ENCODE measurements at regions of chr3 and their contacts with region 1.

Region 1: DNA sequence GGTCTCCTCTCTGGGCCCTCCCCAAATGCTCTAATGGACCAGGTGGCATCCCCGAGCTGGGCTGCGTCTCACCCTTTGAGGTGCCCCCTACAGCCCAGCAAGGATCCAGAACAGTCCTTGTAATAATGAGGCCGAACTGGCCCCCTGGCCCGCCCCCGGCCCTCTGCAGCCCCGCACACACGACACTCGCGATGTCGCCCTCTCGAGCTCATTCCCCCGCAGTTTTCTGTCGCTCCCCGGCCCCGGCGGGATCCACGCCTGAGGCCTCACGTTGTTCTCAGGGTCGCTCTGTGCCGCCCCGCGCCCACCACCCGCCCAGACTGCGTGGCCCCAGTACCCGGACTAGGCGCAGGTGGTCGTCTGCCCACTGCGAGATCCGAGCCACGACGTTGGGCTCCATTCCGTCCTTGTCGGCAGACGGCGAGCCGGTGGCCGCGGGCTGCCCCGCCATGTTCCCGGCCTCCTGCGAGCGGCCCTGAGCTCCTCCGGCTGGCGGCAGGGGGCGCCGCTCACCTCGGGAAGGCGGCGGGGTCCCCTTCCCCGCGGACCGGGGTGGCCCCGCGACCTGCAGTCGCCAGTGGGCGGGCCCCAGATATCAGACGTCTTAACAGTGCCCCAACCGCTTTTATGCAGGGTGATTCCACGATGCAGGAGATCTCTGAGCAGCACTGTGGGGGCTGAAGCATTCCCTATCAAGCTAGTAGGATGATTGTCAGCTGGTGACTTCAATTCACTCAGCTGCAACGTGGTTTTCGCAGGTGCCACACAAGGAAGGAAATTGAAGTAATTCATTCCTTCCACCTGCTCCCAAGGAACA is at the start of gene C3orf33:
- DNase-seq: peak; percentile 89 to 91 (median 90)
- ATAC-seq: peak; percentile 96
- H3K4me3 ChIP-seq: peak within 1 kb of the TSS; percentile 71
- H3K27ac ChIP-seq: peak within 1 kb of the TSS; percentile 86
- H3K4me1 ChIP-seq: peaks cover 3 to 16% of the 10 kb centered on the region in 2 experiments; a peak in 4 of 5 replicates
- H3K27me3 ChIP-seq: no peaks in the 10 kb centered on the region
- CTCF ChIP-seq: peak; percentile 90 to 92 (median 91)
- EP300 ChIP-seq: peak; percentile 17; the same call in 1 of the 2 replicates
- POLR2A ChIP-seq: peak; percentile 80
- RAD21 ChIP-seq: peak; percentile 91 to 92
- polyA plus RNA-seq, gene C3orf33: 4.1 to 6.0 TPM

Region 2: DNA sequence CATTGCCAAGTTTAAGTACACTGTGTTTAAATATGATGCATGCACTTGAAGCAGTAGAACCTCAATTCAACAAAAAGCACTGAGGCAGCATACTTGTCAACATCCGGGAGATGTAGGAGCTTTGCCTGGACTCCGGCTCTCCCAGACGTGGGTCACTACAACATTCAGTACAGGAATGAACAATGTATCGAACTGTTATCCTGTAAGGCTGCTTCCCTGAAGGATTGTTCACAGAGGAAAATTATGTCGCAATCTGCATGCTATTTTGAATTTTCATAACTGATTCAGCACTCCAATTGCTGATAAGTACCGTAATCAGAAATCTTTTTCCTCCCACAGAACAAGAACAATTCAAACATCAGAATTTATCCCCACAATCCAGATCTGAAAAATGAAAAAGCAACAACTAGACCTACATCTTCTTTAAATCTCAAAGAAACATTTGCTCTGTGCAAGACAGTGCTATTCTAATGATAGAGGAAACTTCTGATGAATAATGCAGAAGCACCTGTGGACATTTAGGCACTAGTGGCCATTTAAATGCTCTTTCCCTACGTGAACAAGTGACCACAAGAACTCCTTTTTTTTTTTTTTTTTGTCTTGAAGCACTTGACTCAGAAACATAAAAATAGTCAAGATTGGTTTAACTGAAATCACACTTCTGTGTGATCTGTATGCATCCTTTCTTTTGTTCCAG is 174.5 kb before region 1 on chr3:
- CTCF ChIA-PET with region 1: no interaction called
- POLR2A ChIA-PET with region 1: no interaction called
- in situ Hi-C with region 1: no loop called
- intact Hi-C with region 1: no loop called
- DNase-seq: no peak
- ATAC-seq: no peak
- H3K4me3 ChIP-seq: no peak overlapping the region
- H3K27ac ChIP-seq: no peak overlapping the region
- H3K4me1 ChIP-seq: no peaks in the 10 kb centered on the region
- H3K27me3 ChIP-seq: no peaks in the 10 kb centered on the region
- CTCF ChIP-seq: no peak
- EP300 ChIP-seq: no peak
- POLR2A ChIP-seq: no peak
- RAD21 ChIP-seq: no peak

Region 3: GRCh38 chr3:155753036-155753639 is 52.9 kb before region 1 on chr3:
- CTCF ChIA-PET with region 1: no interaction called
- POLR2A ChIA-PET with region 1: interaction called, 3 read pairs
- in situ Hi-C with region 1: no loop called
- intact Hi-C with region 1: loop called (anchors 1 kb)
- DNase-seq: peak in 2 of 4 experiments; percentile 39 to 57
- ATAC-seq: peak; percentile 89
- H3K4me3 ChIP-seq: no peak overlapping the region
- H3K27ac ChIP-seq: no peak overlapping the region
- H3K4me1 ChIP-seq: peaks cover 0 to 5% of the 10 kb centered on the region in 2 experiments; a peak in 2 of 5 replicates
- H3K27me3 ChIP-seq: no peaks in the 10 kb centered on the region
- CTCF ChIP-seq: peak; percentile 48 to 81 (median 50); a peak in 4 of 6 replicates
- EP300 ChIP-seq: no peak
- POLR2A ChIP-seq: no peak
- RAD21 ChIP-seq: peak; percentile 71 to 92

Region 4: GRCh38 chr3:155766206-155766605 is 39.8 kb before region 1 on chr3:
- CTCF ChIA-PET with region 1: no interaction called
- POLR2A ChIA-PET with region 1: no interaction called
- in situ Hi-C with region 1: no loop called
- intact Hi-C with region 1: no loop called
- DNase-seq: no peak
- ATAC-seq: no peak
- H3K4me3 ChIP-seq: no peak overlapping the region
- H3K27ac ChIP-seq: no peak overlapping the region
- H3K4me1 ChIP-seq: no peaks in the 10 kb centered on the region
- H3K27me3 ChIP-seq: no peaks in the 10 kb centered on the region
- CTCF ChIP-seq: no peak
- EP300 ChIP-seq: no peak
- POLR2A ChIP-seq: no peak
- RAD21 ChIP-seq: no peak

Region 5: DNA sequence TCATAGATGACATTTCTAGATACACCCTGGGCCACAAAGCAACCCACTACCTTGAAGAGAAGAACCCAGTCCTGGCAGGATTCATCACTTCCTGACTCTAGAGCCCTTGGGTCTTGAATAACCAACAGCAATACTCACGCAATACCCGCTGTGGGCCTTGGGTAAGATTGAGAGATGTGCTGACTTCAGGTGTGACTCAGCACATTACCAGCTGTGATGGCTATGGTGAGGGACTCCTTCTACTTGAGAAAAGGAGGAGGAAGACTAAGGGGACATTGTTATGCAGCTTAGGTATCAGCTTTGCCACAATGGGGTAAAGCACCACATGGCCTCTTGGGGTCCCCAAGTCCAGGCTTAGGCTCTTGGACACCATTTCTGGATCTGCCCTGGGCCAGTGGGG is 14.8 kb before region 1 on chr3:
- CTCF ChIA-PET with region 1: no interaction called
- POLR2A ChIA-PET with region 1: interaction called, 12 read pairs
- in situ Hi-C with region 1: no loop called
- intact Hi-C with region 1: no loop called
- DNase-seq: peak in 1 of 4 experiments; percentile 36
- ATAC-seq: peak; percentile 71
- H3K4me3 ChIP-seq: no peak overlapping the region
- H3K27ac ChIP-seq: peak overlapping the region; percentile 65; the same call in 2 of the 3 replicates
- H3K4me1 ChIP-seq: peaks cover 0 to 11% of the 10 kb centered on the region in 2 experiments; a peak in 3 of 5 replicates
- H3K27me3 ChIP-seq: no peaks in the 10 kb centered on the region
- CTCF ChIP-seq: no peak
- EP300 ChIP-seq: no peak
- POLR2A ChIP-seq: no peak
- RAD21 ChIP-seq: no peak

Region 6: DNA sequence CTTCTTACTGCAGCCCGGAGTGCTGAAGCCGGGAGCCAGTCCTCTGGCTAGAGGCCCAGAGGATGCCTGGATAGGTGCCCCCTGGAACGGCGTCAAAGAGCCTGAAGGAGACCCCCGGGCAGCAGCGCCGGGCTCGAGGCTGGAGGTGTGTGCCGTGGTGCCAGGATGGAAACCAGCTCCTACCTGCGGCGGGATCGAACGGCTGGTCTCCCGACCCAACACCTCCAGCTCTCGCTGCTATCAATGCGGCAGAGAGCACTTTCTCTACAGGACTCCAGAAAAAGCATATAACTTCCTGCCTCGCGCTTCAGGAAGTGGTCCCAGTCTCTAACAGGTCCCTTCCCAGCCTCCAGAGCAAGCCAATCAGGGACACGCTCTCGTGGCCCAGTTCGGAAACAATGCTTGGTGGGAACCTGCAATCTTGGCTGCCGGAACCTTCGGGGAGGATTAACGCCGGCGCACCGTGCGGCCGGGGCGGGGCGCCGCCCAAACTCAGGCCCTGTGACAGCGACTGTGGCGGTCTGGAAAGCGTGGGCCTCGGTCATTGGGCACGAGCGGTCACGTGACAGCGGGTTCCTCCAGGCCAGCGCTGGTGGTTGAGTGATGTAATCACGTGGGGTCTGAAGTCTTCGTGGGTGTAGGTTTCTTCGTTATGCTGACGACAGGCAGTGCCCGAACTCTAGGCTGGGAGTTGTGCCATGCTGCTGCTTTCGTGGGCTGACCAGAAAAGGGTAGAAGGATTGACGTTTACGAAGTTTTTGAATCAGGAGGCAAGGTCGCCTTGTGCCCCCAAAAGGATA is 48.3 kb after region 1 on chr3 and contains the start of gene SLC33A1:
- CTCF ChIA-PET with region 1: no interaction called
- POLR2A ChIA-PET with region 1: interaction called, 7 read pairs
- in situ Hi-C with region 1: no loop called
- intact Hi-C with region 1: loop called (anchors 2 kb)
- DNase-seq: peak; percentile 97 to 100 (median 98)
- ATAC-seq: peak; percentile 93
- H3K4me3 ChIP-seq: peak within 1 kb of the TSS; percentile 93
- H3K27ac ChIP-seq: peak within 1 kb of the TSS; percentile 98
- H3K4me1 ChIP-seq: peaks cover 3 to 15% of the 10 kb centered on the region in 2 experiments; a peak in 3 of 5 replicates
- H3K27me3 ChIP-seq: no peaks in the 10 kb centered on the region
- CTCF ChIP-seq: peak in 2 of 3 experiments; percentile 2 to 4; a peak in 1 of 6 replicates
- EP300 ChIP-seq: peak; percentile 61
- POLR2A ChIP-seq: peak; percentile 95
- RAD21 ChIP-seq: no peak
- polyA plus RNA-seq, gene SLC33A1: 6.2 to 7.8 TPM

Region 7: GRCh38 chr3:155859859-155860258 is 53.8 kb after region 1 on chr3:
- CTCF ChIA-PET with region 1: interaction called, 3 read pairs
- POLR2A ChIA-PET with region 1: no interaction called
- in situ Hi-C with region 1: no loop called
- intact Hi-C with region 1: loop called (anchors 2 kb)
- DNase-seq: peak in 2 of 4 experiments; percentile 30 to 42
- ATAC-seq: peak; percentile 56
- H3K4me3 ChIP-seq: no peak overlapping the region
- H3K27ac ChIP-seq: no peak overlapping the region
- H3K4me1 ChIP-seq: peaks cover 13 to 16% of the 10 kb centered on the region in 2 experiments; a peak in 3 of 5 replicates
- H3K27me3 ChIP-seq: no peaks in the 10 kb centered on the region
- CTCF ChIP-seq: peak; percentile 30 to 73 (median 38); a peak in 4 of 6 replicates
- EP300 ChIP-seq: no peak
- POLR2A ChIP-seq: no peak
- RAD21 ChIP-seq: peak; percentile 70 to 80

Region 8: DNA sequence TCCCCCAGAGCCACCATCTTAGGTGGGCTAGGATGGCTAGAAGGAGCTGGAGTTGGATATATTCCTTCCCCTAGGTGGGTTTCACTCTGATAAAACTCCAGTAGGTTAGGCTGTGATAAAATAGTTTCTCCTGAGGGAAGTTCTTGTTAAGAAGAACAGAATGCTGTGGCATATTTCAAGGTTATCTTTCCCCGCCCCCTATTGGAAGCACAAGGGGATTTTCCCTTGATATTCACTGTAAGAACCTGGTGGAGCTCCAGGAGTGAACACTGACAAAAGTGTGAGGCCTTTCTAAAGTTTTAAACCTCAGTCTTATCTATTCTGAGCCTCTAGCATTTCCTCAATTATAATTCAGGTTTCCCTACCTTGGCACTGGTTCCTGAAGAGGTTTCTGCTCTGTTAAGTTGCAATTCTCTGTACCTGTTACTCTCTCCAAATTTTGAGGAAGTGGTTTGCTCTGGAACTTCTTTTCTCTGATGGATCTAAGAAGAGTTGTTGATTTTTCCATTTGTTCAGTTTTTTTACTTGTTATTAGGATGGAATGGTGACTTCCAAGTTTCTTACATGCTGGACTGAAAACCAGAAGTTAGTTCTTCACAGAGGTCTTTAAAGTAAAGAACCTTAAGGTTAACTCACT is 177.9 kb after region 1 on chr3:
- CTCF ChIA-PET with region 1: no interaction called
- POLR2A ChIA-PET with region 1: no interaction called
- in situ Hi-C with region 1: no loop called
- intact Hi-C with region 1: loop called (anchors 2 kb)
- DNase-seq: peak in 2 of 4 experiments; percentile 12 to 36
- ATAC-seq: peak; percentile 85
- H3K4me3 ChIP-seq: no peak overlapping the region
- H3K27ac ChIP-seq: no peak overlapping the region
- H3K4me1 ChIP-seq: no peaks in the 10 kb centered on the region
- H3K27me3 ChIP-seq: no peaks in the 10 kb centered on the region
- CTCF ChIP-seq: peak; percentile 28 to 62 (median 42); a peak in 4 of 6 replicates
- EP300 ChIP-seq: no peak
- POLR2A ChIP-seq: no peak
- RAD21 ChIP-seq: peak in 1 of 2 experiments; percentile 64; a peak in 3 of 4 replicates